Naive thymus-derived CD4-positive, alpha-beta T cell (primary cell): ENCODE measurements at regions of chr13 and their contacts with region 1.

Region 1: DNA sequence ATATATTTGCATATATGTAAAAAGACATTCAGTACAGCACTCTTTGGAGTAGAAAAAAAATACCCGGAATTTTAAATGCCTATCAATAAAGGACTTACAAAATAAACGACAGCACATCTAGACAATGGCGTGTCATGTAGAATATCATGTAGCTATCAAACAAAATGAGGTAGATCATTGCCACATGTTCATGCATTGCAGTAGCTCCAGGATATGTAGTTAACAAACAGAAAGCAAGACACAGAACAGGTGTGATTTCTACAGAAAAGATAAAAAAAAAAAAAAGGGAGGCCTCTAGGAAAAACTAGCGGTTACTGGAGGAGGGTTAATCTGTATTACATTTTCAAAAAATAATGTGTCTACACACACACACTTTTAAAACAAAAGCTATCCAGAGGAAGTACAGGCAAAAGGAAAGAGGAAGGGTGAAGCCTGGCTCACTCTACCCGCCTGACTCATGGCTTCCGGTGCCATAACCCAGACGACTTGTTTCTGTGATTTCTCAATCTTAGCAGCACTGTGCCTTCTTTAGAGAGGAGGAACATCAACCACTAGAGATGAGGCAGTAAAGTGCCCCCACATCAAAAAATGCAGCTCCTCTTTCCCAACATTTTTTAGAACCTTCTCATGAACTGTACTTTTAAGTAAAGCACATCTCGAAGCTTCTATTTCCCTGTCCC is 6.9 kb downstream of the KCTD12 start:
- DNase-seq: peak in 8 of 9 donors; percentile 46 to 66 (median 56)
- ATAC-seq: peak; percentile 94
- H3K4me3 ChIP-seq: peak overlapping the region; percentile 3
- H3K4me3 Mint-ChIP-seq: peak overlapping the region; percentile 56 to 87 (median 69)
- H3K27ac ChIP-seq: peak overlapping the region; percentile 31
- H3K27ac Mint-ChIP-seq: peak overlapping the region; percentile 52 to 93 (median 78)
- H3K4me1 ChIP-seq: peaks cover 0 to 21% of the 10 kb centered on the region in 2 donors
- H3K4me1 Mint-ChIP-seq: peaks cover 17 to 51% (median 46%) of the 10 kb centered on the region in 7 donors
- H3K27me3 ChIP-seq: no peaks in the 10 kb centered on the region
- H3K27me3 Mint-ChIP-seq: peaks cover 0 to 15% (median 0%) of the 10 kb centered on the region in 5 donors

Region 2: GRCh38 chr13:76852986-76853385 is 26.4 kb before region 1 on chr13:
- CTCF ChIA-PET with region 1: no interaction called
- POLR2A ChIA-PET with region 1: no interaction called
- intact Hi-C with region 1: loop called in 1 of 2 experiments (anchors 2 kb)
- DNase-seq: no peak
- ATAC-seq: no peak
- H3K4me3 ChIP-seq: no peak overlapping the region
- H3K4me3 Mint-ChIP-seq: no peak overlapping the region
- H3K27ac ChIP-seq: no peak overlapping the region
- H3K27ac Mint-ChIP-seq: no peak overlapping the region
- H3K4me1 ChIP-seq: no peaks in the 10 kb centered on the region
- H3K4me1 Mint-ChIP-seq: peaks cover 0 to 2% (median 0%) of the 10 kb centered on the region in 7 donors
- H3K27me3 ChIP-seq: no peaks in the 10 kb centered on the region
- H3K27me3 Mint-ChIP-seq: no peaks in the 10 kb centered on the region